ENCODE measurements at regions of chr6 and their contacts with region 1.

Region 1: DNA sequence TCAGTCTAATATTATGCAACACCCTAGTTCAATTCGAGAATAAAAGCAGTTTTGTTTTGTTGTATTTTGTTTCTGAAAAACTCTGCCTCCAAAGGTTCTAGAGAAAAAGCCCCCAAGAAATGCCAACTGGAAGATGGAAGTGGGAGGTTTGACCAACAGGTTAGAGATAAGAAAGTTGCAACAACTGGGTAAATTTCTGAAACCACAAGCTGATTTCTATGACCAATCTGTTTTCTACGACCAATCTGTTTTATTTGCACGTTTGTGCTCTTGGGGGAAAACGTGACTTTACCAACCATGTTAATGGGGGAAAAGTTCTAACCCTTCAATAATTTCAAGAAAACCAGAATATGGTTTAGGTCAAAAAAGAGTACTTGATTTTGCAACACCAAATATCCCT is 173.2 kb downstream of the PDE7B start:
- DNase-seq: no peak
- ATAC-seq: no peak

Region 2: DNA sequence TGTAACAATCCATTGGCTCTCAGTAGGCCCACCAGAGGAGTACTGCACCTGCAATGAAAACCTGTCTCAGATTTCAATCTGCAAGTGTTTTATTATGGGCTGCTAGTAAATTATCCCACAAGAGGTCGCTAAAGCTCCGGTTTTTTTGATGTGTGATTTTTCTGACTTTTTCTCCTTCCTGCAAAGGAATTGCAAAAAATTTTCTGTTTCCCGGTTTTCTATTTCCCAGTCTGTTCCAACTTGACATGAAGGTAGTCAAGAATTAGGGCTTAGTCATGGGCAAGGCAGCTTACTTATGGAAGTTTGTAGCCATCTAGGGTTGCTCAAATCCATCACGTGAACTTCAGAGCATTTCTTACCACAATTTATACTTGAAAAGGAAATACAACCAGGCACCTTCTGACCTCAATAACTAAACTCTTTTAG is 488.7 kb before region 1 on chr6:
- intact Hi-C with region 1: loop called (anchors 10 kb)
- DNase-seq: no peak
- ATAC-seq: no peak

Region 3: DNA sequence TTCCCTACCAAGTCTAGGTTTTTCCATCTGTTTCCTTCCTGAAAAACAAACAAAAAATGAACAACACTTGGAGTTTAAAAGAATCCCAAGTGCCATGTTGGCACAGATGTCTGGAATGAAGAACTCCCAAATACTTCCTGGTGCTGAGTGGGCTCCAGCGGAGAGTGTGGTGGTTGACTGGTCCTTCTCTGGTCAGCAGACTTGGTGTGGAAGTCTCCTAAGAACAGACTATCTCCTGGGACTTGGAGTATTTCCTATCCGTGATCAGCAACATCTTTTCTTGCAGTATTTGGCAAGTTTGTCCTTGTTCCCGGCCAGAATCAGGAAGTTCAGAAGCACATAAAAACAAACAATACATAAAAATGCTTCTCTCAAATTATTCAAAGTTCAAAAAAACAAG is 71.3 kb after region 1 on chr6:
- intact Hi-C with region 1: no loop called
- DNase-seq: no peak
- ATAC-seq: peak; percentile 91

Region 4: GRCh38 chr6:136289579-136290409 is 265.1 kb after region 1 on chr6 and contains the start of gene BCLAF1:
- intact Hi-C with region 1: no loop called
- DNase-seq: peak; percentile 100
- ATAC-seq: peak; percentile 97
- total RNA-seq, gene BCLAF1: 61.0 TPM

Region 5: GRCh38 chr6:136579800-136580199 is 555.1 kb after region 1 on chr6:
- intact Hi-C with region 1: no loop called
- DNase-seq: no peak
- ATAC-seq: no peak